SK-N-SH (cell line): ENCODE measurements at regions of chr9 and their contacts with region 1.

Region 1: DNA sequence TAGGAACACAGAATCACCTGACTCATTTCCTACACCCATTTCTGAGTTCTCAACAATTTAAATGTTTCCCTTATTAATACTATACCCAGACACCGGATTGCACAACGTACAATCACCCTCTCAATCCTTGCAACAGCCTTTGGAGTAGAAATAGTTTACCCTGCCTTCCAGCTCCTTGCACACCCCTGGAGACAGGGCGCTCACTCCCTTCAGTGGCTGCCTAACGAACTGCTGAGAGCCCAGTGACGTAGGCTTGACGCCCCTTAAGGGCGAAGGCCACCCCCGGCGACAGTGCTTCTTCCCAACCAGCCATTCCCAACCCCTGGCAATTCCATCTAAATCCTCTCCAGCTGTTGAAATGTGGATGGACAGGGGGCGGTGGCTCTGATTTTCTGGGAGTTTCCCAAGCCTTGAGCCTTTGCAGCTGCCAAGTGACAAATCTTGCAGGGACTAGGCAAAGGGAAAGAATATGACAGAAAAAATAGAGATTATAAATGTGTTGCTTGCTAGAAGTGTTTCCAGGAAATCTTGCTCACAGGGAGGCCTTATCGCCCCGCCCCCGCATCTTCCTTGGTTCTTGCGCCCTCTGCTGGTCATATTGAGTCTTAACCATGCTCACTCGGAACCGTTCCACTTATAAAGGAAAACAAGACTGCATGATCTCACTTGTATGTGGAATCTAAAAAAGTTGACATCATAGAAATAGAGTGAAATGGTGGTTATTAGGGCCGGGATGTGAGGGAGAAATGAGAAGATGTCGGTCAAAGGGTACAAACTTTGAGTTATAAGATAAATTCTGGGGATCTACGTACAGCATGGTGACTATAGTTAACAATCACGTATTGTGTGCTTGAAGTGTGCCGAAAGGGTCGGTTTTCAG is 7.6 kb upstream of the BARX1 start:
- DNase-seq: peak; percentile 89
- H3K4me3 ChIP-seq: peak overlapping the region in 1 of 2 experiments; percentile 28; a peak in 1 of 4 replicates
- H3K27ac ChIP-seq: no peak overlapping the region
- H3K4me1 ChIP-seq: peaks cover 0 to 12% of the 10 kb centered on the region in 2 experiments; a peak in 1 of 4 replicates
- H3K27me3 ChIP-seq: peaks cover 38% of the 10 kb centered on the region
- CTCF ChIP-seq: peak; percentile 88
- EP300 ChIP-seq: no peak
- RAD21 ChIP-seq: peak; percentile 82

Region 2: DNA sequence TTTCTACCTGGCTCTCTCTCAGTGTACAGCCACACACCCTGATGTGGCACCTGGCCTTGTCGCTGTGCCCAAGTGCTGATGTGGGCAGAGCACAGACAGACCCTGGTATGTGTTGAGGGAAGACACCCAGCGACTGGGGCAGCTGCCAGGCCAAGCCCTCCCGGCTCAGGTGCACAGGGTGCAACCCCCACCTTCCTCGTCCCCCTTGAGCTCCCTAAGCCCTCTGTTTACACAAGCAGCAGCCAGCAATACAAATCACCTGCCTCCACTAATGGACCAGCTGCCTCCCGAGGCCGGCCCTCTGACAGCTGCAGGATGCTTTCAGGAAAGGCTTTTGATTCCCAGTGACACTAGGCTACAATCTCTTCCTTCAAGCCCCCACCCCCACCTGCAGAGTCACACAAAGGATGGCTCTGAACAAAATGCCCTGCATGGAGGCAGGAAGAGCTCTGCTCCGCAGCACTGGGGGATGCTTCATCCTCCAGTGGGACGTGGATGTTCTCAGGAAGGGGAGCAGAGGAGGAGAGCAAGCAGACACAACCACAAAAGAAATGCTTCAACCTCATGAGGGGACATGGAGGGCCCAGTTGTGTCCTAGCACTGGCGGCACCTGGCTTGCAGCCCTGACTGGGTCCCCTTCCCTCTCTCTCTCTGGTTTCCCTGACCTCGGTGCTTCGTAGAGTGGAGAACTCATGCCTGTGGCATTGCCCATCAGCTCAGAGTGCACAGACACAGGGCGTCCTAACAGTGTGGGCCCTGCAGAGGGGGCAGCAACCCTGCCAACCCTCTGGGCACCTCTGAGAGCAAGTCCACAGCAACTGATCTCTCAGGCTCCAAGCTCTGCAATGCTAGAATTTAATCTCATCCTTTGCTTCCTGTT is 148.5 kb before region 1 on chr9:
- CTCF ChIA-PET with region 1: interaction called, 10 read pairs
- POLR2A ChIA-PET with region 1: no interaction called
- DNase-seq: peak; percentile 38
- H3K4me3 ChIP-seq: no peak overlapping the region
- H3K27ac ChIP-seq: no peak overlapping the region
- H3K4me1 ChIP-seq: no peaks in the 10 kb centered on the region
- H3K27me3 ChIP-seq: no peaks in the 10 kb centered on the region
- CTCF ChIP-seq: no peak
- EP300 ChIP-seq: no peak
- RAD21 ChIP-seq: peak; percentile 21; the same call in 1 of the 2 replicates

Region 3: GRCh38 chr9:93950619-93951601 is 11.9 kb before region 1 on chr9:
- CTCF ChIA-PET with region 1: interaction called, 69 read pairs
- POLR2A ChIA-PET with region 1: no interaction called
- DNase-seq: peak; percentile 76
- H3K4me3 ChIP-seq: peak overlapping the region; percentile 45 to 53
- H3K27ac ChIP-seq: no peak overlapping the region
- H3K4me1 ChIP-seq: peaks cover 0 to 11% of the 10 kb centered on the region in 2 experiments; a peak in 1 of 4 replicates
- H3K27me3 ChIP-seq: peaks cover 85% of the 10 kb centered on the region
- CTCF ChIP-seq: no peak
- EP300 ChIP-seq: no peak
- RAD21 ChIP-seq: no peak

Region 4: DNA sequence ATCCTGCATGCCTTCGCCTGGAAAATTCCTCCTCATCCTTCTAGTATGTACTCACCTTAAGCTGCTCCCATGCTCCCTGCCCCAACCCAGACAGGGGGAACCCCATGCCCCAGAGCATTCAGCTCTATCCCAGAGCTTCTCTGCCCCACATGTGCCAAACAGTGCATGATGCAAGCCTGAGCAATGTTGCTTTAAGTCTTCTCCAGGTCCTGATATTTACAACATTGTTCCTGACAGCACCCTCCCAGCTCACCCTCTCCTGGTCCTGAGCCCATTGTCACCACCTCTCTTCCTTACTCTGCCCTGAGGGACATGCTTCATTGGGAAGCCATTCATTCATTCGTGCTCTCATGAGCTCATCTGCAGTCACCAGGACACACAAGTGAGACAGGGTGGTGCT is 15.8 kb after region 1 on chr9:
- CTCF ChIA-PET with region 1: interaction called, 38 read pairs
- POLR2A ChIA-PET with region 1: no interaction called
- DNase-seq: no peak
- H3K4me3 ChIP-seq: no peak overlapping the region
- H3K27ac ChIP-seq: no peak overlapping the region
- H3K4me1 ChIP-seq: no peaks in the 10 kb centered on the region
- H3K27me3 ChIP-seq: no peaks in the 10 kb centered on the region
- CTCF ChIP-seq: no peak
- EP300 ChIP-seq: no peak
- RAD21 ChIP-seq: no peak